ENCODE measurements at regions of chr10 and their contacts with region 1.

Region 1: DNA sequence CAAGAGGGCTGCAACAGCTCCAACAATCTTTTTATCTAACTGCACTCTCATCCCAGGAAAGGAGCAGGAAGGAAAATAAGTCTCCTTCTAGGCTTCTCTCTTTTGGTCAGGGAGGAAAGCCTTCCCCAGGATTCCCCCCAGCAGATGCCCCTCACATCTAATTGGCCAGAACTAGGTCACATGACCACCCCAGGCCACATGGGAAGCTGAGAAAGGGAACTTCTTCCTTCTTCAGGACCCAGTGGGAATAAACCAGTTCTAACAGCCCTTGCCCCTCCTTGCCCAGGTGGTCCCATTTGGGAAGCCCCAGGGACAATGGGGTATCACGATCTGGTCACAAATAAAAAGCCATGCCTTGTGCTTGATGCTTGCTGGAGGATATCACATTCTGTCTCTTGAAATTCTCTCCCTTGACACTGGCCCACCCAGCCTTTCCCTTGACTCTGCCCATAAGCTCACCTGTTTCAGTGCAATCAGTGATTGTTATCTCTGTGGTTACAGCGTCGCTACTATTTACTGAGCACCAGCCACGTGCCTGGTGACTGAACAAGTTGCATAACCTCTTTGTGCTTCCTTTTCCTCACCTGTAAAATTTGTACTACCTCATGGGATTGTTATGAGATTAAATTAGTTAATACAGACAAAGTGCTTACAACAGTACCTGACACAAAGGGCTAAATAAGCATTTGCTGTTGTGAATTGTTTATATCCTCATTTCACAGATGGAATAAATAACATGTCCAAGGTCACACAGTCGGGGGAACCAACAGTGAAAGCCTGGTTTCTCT is 9.0 kb upstream of the TACR2 start:
- DNase-seq: peak in 1 of 42 donors; percentile 15

Region 2: DNA sequence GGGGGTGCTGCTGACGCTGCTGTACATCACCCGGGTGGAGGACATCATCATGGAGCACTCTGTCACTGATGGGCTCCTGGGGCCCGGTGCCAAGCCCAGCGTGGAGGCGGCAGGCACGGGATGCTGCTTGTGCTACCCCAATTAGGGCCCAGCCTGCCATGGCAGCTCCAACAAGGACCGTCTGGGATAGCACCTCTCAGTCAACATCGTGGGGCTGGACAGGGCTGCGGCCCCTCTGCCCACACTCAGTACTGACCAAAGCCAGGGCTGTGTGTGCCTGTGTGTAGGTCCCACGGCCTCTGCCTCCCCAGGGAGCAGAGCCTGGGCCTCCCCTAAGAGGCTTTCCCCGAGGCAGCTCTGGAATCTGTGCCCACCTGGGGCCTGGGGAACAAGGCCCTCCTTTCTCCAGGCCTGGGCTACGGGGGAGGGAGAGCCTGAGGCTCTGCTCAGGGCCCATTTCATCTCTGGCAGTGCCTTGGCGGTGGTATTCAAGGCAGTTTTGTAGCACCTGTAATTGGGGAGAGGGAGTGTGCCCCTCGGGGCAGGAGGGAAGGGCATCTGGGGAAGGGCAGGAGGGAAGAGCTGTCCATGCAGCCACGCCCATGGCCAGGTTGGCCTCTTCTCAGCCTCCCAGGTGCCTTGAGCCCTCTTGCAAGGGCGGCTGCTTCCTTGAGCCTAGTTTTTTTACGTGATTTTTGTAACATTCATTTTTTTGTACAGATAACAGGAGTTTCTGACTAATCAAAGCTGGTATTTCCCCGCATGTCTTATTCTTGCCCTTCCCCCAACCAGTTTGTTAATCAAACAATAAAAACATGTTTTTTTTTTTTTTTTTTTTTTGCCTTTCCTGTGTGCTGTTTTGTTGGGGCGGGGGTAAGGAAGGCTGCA is 81.4 kb after region 1 on chr10:
- intact Hi-C with region 1: loop called (anchors 5 kb)
- DNase-seq: peak in 5 of 42 donors; percentile 41 to 59 (median 50)